Naive thymus-derived CD4-positive, alpha-beta T cell (primary cell): ENCODE measurements at regions of chr4 and their contacts with region 1.

Region 1: DNA sequence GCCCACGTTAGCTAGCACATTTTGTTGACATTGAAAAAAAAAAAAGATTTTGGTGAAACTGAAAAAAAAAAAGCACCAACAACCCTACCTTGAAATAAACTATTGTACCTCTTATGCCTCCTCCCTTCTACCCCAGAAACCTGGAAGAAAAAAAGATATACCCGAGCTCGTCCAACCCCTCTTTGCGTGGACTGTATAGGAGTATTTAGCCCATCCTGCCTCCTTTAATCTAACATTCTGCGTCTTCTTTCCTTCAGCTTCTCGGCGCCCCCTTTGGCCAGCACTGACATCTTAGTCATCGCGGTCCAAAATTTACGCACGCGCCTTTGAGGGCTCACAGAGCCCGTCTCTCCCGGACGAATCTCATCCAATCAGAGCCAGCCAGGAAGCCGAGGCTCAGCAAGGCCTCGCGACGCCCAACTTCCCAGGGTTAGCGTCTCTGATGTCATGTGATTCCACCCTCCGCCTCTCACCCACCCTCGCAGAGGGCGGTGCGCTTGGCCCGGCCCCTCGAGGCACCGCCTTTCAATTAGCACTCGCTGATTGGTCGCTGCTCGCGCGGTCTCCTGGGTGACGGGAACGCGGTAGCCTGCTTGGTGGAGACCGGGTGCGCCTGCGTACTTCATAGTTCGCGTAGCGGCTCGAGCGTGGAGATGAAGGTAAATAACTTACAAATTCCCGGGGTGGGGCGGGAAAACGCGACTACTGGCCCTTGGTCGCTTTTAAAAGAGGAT is at the start of gene WDR19:
- DNase-seq: peak; percentile 91 to 98 (median 98)
- ATAC-seq: peak; percentile 98
- H3K4me3 ChIP-seq: peak within 1 kb of the TSS; percentile 91
- H3K4me3 Mint-ChIP-seq: no peak within 1 kb of the TSS
- H3K27ac ChIP-seq: peak within 1 kb of the TSS; percentile 72
- H3K27ac Mint-ChIP-seq: peak within 1 kb of the TSS in 4 of 9 donors; percentile 8 to 47 (median 21)
- H3K4me1 ChIP-seq: peaks cover 3 to 12% of the 10 kb centered on the region in 2 donors
- H3K4me1 Mint-ChIP-seq: peaks cover 0 to 12% (median 9%) of the 10 kb centered on the region in 7 donors
- H3K27me3 ChIP-seq: no peaks in the 10 kb centered on the region
- H3K27me3 Mint-ChIP-seq: peaks cover 0 to 16% (median 3%) of the 10 kb centered on the region in 5 donors
- total RNA-seq, gene WDR19: 14.0 to 44.3 (median 15.4) TPM

Region 2: DNA sequence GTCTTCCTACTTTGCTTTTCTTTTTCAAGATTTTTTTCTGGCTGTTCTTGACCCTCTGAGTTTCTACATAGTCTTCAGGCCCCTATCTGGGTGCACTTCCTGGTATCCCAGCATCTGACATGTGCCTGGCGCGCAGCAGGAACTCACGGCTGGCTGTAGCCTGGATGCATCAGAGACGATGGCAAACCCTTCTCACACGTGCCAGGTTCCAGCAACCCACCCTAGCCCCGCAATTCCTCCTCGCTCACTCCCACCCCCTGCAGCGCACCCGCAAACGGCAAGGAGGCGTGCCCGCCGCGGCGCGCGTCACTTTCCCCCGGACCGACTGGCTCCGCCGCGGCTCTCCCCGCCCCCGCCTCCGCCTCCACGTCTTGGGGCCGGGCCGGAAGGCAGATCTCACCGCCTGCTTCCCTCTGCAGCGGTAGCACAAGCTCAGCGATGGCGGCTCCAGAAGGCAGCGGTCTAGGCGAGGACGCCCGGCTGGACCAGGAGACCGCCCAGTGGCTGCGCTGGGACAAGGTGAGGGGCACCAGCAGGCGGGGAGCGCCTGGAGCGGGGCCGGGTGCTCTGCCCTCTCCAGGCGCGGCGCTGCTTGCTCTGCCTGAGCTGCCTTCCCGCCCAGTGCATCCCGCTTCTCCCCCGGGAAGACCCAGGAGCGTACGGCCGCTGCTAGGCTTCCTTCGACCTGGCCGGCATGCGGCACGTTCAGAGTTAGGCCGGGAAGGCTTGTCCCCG is 1355.6 kb before region 1 on chr4 and contains the start of gene PGM2:
- CTCF ChIA-PET with region 1: no interaction called
- POLR2A ChIA-PET with region 1: no interaction called
- intact Hi-C with region 1: loop called in 1 of 2 experiments (anchors 5 kb)
- DNase-seq: peak; percentile 84 to 94 (median 90)
- ATAC-seq: peak; percentile 99
- H3K4me3 ChIP-seq: peak within 1 kb of the TSS; percentile 79
- H3K4me3 Mint-ChIP-seq: peak within 1 kb of the TSS; percentile 93 to 100 (median 98)
- H3K27ac ChIP-seq: peak within 1 kb of the TSS; percentile 80
- H3K27ac Mint-ChIP-seq: peak within 1 kb of the TSS; percentile 92 to 99 (median 96)
- H3K4me1 ChIP-seq: peaks cover 7 to 11% of the 10 kb centered on the region in 2 donors
- H3K4me1 Mint-ChIP-seq: peaks cover 34 to 70% (median 55%) of the 10 kb centered on the region in 7 donors
- H3K27me3 ChIP-seq: no peaks in the 10 kb centered on the region
- H3K27me3 Mint-ChIP-seq: peaks cover 0 to 5% (median 0%) of the 10 kb centered on the region in 5 donors
- total RNA-seq, gene PGM2: 14.4 to 35.2 (median 18.7) TPM

Region 3: GRCh38 chr4:38759113-38759789 is 422.8 kb before region 1 on chr4:
- CTCF ChIA-PET with region 1: no interaction called
- POLR2A ChIA-PET with region 1: no interaction called
- intact Hi-C with region 1: loop called in 1 of 2 experiments (anchors 1 kb)
- DNase-seq: peak; percentile 29 to 66 (median 58)
- ATAC-seq: peak; percentile 64
- H3K4me3 ChIP-seq: no peak overlapping the region
- H3K4me3 Mint-ChIP-seq: no peak overlapping the region
- H3K27ac ChIP-seq: no peak overlapping the region
- H3K27ac Mint-ChIP-seq: peak overlapping the region in 2 of 9 donors; percentile 10 to 41
- H3K4me1 ChIP-seq: peaks cover 0 to 5% of the 10 kb centered on the region in 2 donors
- H3K4me1 Mint-ChIP-seq: peaks cover 8 to 31% (median 19%) of the 10 kb centered on the region in 7 donors
- H3K27me3 ChIP-seq: no peaks in the 10 kb centered on the region
- H3K27me3 Mint-ChIP-seq: no peaks in the 10 kb centered on the region

Region 4: GRCh38 chr4:38902695-38903094 is 279.4 kb before region 1 on chr4:
- CTCF ChIA-PET with region 1: interaction called, 4 read pairs
- POLR2A ChIA-PET with region 1: no interaction called
- intact Hi-C with region 1: loop called (anchors 1 to 2 kb)
- DNase-seq: peak in 6 of 9 donors; percentile 27 to 60 (median 49)
- ATAC-seq: peak; percentile 84
- H3K4me3 ChIP-seq: no peak overlapping the region
- H3K4me3 Mint-ChIP-seq: no peak overlapping the region
- H3K27ac ChIP-seq: no peak overlapping the region
- H3K27ac Mint-ChIP-seq: peak overlapping the region in 1 of 9 donors; percentile 36
- H3K4me1 ChIP-seq: no peaks in the 10 kb centered on the region
- H3K4me1 Mint-ChIP-seq: peaks cover 0 to 12% (median 0%) of the 10 kb centered on the region in 7 donors
- H3K27me3 ChIP-seq: no peaks in the 10 kb centered on the region
- H3K27me3 Mint-ChIP-seq: peaks cover 0 to 9% (median 0%) of the 10 kb centered on the region in 5 donors

Region 5: GRCh38 chr4:39134683-39135319 is 47.3 kb before region 1 on chr4:
- CTCF ChIA-PET with region 1: interaction called, 3 read pairs
- POLR2A ChIA-PET with region 1: no interaction called
- intact Hi-C with region 1: loop called (anchors 1 to 2 kb)
- DNase-seq: peak in 1 of 9 donors; percentile 2
- ATAC-seq: no peak
- H3K4me3 ChIP-seq: no peak overlapping the region
- H3K4me3 Mint-ChIP-seq: no peak overlapping the region
- H3K27ac ChIP-seq: no peak overlapping the region
- H3K27ac Mint-ChIP-seq: peak overlapping the region in 1 of 9 donors; percentile 37
- H3K4me1 ChIP-seq: peaks cover 0 to 3% of the 10 kb centered on the region in 2 donors
- H3K4me1 Mint-ChIP-seq: peaks cover 1 to 18% (median 12%) of the 10 kb centered on the region in 7 donors
- H3K27me3 ChIP-seq: no peaks in the 10 kb centered on the region
- H3K27me3 Mint-ChIP-seq: no peaks in the 10 kb centered on the region

Region 6: GRCh38 chr4:39446751-39447573 is 264.9 kb after region 1 on chr4:
- CTCF ChIA-PET with region 1: no interaction called
- POLR2A ChIA-PET with region 1: no interaction called
- intact Hi-C with region 1: no loop called
- DNase-seq: peak in 6 of 9 donors; percentile 25 to 51 (median 40)
- ATAC-seq: peak; percentile 90
- H3K4me3 ChIP-seq: peak overlapping the region; percentile 26
- H3K4me3 Mint-ChIP-seq: peak overlapping the region; percentile 48 to 81 (median 70)
- H3K27ac ChIP-seq: no peak overlapping the region
- H3K27ac Mint-ChIP-seq: peak overlapping the region in 3 of 9 donors; percentile 6 to 65 (median 38)
- H3K4me1 ChIP-seq: peaks cover 0 to 3% of the 10 kb centered on the region in 2 donors
- H3K4me1 Mint-ChIP-seq: peaks cover 0 to 11% (median 6%) of the 10 kb centered on the region in 7 donors
- H3K27me3 ChIP-seq: no peaks in the 10 kb centered on the region
- H3K27me3 Mint-ChIP-seq: no peaks in the 10 kb centered on the region

Region 7: DNA sequence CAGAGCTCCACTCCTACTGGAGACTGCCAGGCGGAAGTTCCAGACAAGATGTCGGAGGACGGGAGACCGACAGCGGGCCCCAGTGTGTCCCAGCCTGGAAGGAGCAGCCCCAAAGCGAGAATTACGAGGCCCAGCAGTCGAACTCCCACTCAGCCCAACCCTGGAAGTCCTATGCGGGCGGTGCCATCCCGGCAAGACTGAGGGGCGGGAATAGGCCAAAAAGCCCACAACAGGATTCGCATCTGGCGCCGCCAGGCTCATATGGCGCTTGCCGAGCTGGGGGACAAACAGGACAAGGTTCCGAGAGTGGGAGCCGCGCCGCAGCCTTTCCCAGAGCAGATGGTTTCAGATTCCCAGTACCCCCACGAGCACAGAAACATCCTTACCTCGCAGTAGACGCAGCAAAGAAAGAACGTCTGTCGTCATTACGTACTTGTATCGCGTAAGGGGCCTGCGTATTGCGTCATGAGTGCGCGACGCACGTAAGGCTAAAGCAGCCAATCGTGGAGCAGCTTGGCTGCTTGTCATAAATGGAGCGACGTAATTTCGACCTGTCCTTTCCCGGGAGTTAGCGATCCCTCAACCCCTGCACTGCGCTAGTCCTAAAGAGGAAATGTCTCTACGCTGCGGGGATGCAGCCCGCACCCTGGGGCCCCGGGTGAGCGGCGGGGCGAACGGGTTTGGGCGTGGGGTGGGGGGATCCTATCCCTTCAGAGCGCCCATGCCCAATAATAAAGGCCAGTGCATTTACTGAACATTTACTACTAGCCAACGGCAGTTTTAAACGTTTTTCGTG is 276.6 kb after region 1 on chr4 and contains the starts of genes LIAS and RPL9:
- CTCF ChIA-PET with region 1: no interaction called
- POLR2A ChIA-PET with region 1: interaction called, 3 read pairs
- intact Hi-C with region 1: loop called (anchors 1 kb)
- DNase-seq: peak; percentile 80 to 96 (median 92)
- ATAC-seq: peak; percentile 93
- H3K4me3 ChIP-seq: peak within 1 kb of the TSS; percentile 85
- H3K4me3 Mint-ChIP-seq: peak within 1 kb of the TSS; percentile 92 to 99 (median 96)
- H3K27ac ChIP-seq: peak within 1 kb of the TSS; percentile 95
- H3K27ac Mint-ChIP-seq: peak within 1 kb of the TSS; percentile 98 to 100 (median 99)
- H3K4me1 ChIP-seq: peaks cover 17 to 19% of the 10 kb centered on the region in 2 donors
- H3K4me1 Mint-ChIP-seq: peaks cover 8 to 60% (median 47%) of the 10 kb centered on the region in 7 donors
- H3K27me3 ChIP-seq: no peaks in the 10 kb centered on the region
- H3K27me3 Mint-ChIP-seq: peaks cover 0 to 2% (median 0%) of the 10 kb centered on the region in 5 donors
- total RNA-seq, gene LIAS: 14.5 to 27.8 (median 16.4) TPM
- total RNA-seq, gene RPL9: 1,414 to 3,398 (median 2,567) TPM

Region 8: GRCh38 chr4:39697740-39698423 is 515.8 kb after region 1 on chr4 and contains the start of gene UBE2K:
- CTCF ChIA-PET with region 1: no interaction called
- POLR2A ChIA-PET with region 1: no interaction called
- intact Hi-C with region 1: loop called (anchors 2 to 5 kb)
- DNase-seq: peak; percentile 82 to 97 (median 91)
- ATAC-seq: peak; percentile 93
- H3K4me3 ChIP-seq: peak within 1 kb of the TSS; percentile 94
- H3K4me3 Mint-ChIP-seq: peak within 1 kb of the TSS; percentile 95 to 100 (median 98)
- H3K27ac ChIP-seq: peak within 1 kb of the TSS; percentile 98
- H3K27ac Mint-ChIP-seq: peak within 1 kb of the TSS; percentile 96 to 99 (median 97)
- H3K4me1 ChIP-seq: peaks cover 17 to 22% of the 10 kb centered on the region in 2 donors
- H3K4me1 Mint-ChIP-seq: peaks cover 19 to 53% (median 37%) of the 10 kb centered on the region in 7 donors
- H3K27me3 ChIP-seq: no peaks in the 10 kb centered on the region
- H3K27me3 Mint-ChIP-seq: no peaks in the 10 kb centered on the region
- total RNA-seq, gene UBE2K: 31.1 to 85.0 (median 43.7) TPM